Heart right ventricle (tissue), 16 donors: ENCODE measurements at regions of chr14 and their contacts with region 1.

Region 1: GRCh38 chr14:33839193-33840076 is 111.4 kb downstream of the EGLN3 start:
- DNase-seq: peak; percentile 25 to 67
- ATAC-seq: peak; percentile 69 to 84 (median 78)
- H3K4me3 ChIP-seq: no peak overlapping the region
- H3K27ac ChIP-seq: no peak overlapping the region
- H3K4me1 ChIP-seq: peaks cover 0 to 16% (median 4%) of the 10 kb centered on the region in 9 donors
- H3K27me3 ChIP-seq: no peaks in the 10 kb centered on the region
- CTCF ChIP-seq: peak; percentile 76 to 94 (median 88)

Region 2: DNA sequence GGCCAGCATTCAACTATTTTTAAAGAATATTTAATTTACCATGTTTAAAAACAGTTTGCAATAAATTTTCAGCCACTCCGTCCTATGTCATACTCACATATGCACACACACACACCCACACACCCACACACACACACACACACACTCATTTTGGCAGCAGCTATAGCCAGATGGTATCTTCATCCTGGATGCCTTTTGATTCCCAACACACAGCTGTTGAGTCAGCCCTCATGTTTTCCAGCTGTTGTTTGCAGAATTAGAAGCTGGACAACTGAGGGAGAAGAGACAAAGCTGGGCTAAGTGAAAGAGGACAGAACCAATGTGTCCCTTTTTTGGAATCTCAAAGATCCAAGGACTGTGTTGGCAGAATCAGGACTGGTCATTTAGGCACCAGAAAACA is 191.4 kb after region 1 on chr14:
- intact Hi-C with region 1: loop called in 1 of 10 experiments (anchors 10 kb)
- DNase-seq: peak; percentile 25 to 73
- ATAC-seq: peak; percentile 50 to 81 (median 66)
- H3K4me3 ChIP-seq: no peak overlapping the region
- H3K27ac ChIP-seq: peak overlapping the region in 7 of 10 donors; percentile 33 to 69 (median 57)
- H3K4me1 ChIP-seq: peaks cover 4 to 39% (median 22%) of the 10 kb centered on the region in 9 donors
- H3K27me3 ChIP-seq: no peaks in the 10 kb centered on the region
- CTCF ChIP-seq: no peak

Region 3: DNA sequence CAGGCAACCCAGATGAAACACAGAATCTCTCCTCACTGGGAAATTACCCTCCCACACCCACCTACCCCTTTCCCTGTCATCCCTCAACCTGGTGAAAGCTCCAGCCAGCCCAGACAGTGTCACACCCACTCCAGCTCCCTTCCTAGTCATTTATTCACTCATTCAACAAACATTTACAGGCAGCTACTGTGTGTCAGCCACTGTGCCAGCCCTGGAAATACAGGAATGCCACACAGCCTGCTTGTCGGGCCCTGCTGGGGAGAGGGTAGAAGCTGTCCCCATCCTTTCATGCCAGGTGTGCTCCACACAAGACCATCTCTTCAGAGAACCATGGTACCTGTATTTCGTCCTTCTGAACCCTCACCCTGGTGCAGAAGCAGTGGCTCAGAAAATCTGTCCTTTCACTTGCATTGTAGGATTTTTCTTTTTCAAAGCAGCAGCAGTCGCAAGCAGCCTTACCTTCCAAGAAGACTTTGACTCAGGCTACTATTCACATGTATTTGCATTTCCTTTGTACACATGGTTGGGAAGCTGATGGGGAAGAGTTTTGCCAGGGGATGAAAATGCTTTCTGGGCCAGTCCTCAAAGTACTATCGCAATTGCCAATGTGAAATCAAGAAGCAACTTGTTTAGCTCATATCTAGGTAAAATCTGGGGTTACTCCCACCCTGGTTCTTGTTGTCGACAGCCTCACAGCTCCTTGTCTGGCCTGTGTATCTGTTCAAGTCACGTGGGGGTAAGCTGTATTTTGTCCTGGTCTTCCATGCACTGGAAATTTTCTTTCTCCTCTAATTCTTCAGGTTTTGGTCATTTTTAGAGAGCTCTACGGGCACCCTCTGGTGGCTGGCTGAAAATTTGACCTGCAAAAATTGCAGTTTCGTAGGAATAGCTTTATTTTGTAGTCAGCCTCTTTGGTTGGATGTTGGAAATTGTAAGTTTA is 258.9 kb after region 1 on chr14:
- intact Hi-C with region 1: loop called in 8 of 10 experiments (anchors 2 to 5 kb)
- DNase-seq: peak in 1 of 2 donors; percentile 24
- ATAC-seq: peak in 7 of 8 donors; percentile 34 to 77 (median 59)
- H3K4me3 ChIP-seq: no peak overlapping the region
- H3K27ac ChIP-seq: peak overlapping the region in 2 of 10 donors; percentile 18 to 20
- H3K4me1 ChIP-seq: peaks cover 0 to 25% (median 8%) of the 10 kb centered on the region in 9 donors
- H3K27me3 ChIP-seq: no peaks in the 10 kb centered on the region
- CTCF ChIP-seq: peak in 8 of 9 donors; percentile 46 to 78 (median 70)

Region 4: DNA sequence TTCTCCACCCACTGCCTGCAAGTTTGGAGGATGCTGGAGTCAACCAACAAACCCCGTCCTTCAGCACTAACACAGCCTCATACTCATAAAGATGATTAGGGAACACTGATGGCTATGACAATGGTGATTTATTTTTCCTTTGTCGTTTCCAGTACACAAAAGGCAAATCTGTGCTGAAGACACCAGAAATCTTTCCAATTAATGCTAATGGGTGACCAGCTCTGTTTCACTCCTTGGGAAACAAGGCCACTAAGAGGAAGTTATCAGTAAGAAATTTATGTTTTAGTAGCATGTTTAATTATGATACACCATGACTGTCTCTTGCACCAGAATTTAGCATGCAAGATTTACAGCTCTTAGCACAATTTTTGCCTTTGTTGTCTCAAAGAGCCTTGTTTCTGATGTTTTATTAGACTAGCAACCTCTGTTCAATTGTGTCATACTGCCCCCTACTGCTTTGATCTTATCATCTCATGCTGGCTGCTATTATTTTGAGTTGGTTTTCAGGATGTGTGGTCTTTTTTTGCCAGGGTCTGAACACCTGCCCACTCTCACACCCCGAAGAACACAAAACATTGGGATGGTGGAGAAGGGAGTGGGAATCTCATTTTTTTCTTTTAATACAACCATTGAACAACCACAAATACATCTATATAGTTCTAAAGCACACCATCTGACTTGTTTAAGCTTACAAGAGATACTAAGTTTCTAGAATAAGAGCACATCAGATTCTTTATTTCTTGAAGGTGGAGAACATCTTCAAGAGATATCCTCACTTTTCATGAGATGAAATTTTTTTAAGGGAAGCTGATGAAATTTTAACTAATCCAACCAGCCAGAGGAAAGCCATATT is 461.7 kb after region 1 on chr14:
- intact Hi-C with region 1: loop called (anchors 2 to 10 kb)
- DNase-seq: no peak
- ATAC-seq: peak in 3 of 8 donors; percentile 33 to 61 (median 53)
- H3K4me3 ChIP-seq: no peak overlapping the region
- H3K27ac ChIP-seq: no peak overlapping the region
- H3K4me1 ChIP-seq: peaks cover 0 to 11% (median 0%) of the 10 kb centered on the region in 9 donors
- H3K27me3 ChIP-seq: no peaks in the 10 kb centered on the region
- CTCF ChIP-seq: peak; percentile 39 to 76 (median 66)

Region 5: GRCh38 chr14:34322940-34323418 is 483.5 kb after region 1 on chr14:
- intact Hi-C with region 1: loop called in 2 of 10 experiments (anchors 5 kb)
- DNase-seq: peak; percentile 51
- ATAC-seq: peak in 7 of 8 donors; percentile 51 to 71 (median 68)
- H3K4me3 ChIP-seq: no peak overlapping the region
- H3K27ac ChIP-seq: no peak overlapping the region
- H3K4me1 ChIP-seq: peaks cover 0 to 12% (median 0%) of the 10 kb centered on the region in 9 donors
- H3K27me3 ChIP-seq: no peaks in the 10 kb centered on the region
- CTCF ChIP-seq: peak; percentile 54 to 79 (median 75)